ENCODE measurements at regions of chr22 and their contacts with region 1.

Region 1: DNA sequence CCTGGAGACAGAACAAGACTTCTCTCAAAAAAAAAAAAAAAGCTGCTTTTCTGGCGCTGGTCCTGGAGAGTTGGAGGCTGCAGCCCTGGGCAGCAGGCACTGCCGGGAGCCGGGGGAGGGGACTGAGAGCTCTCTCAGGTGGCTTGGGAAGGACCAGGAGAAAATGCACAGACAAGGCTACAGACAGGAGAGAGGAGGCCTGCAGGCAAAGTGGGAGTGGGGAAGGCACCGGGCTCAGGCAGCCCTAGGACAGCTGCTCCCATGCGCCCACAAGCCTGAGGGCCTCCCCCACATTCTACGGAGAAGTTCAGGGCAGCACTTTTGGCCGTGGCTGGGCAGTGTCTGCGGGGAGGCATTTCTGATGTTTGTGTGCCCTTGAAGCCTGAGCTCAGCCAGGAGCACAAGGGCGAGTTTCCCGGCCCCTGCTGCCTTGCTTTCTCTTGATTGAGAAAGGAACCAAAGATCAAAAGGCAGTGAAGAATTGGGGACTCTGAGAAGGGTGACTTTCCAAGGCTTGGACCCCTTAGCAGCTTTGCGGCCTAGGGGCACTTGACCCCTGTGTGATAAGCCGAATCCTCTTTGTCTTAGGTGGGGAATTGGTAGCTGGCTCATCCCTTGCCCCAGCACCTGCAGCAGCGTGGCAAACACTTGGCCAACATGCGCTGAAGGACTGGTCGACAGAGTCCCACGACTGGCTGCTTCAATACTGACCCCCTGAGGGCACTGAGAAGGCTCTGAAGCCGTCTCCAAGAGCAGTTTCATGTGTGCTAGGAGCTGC is 35.3 kb downstream of the PPM1F start:
- DNase-seq: peak in 1 of 2 donors; percentile 36
- ATAC-seq: peak in 2 of 4 donors; percentile 23 to 30
- H3K4me3 ChIP-seq: no peak overlapping the region
- H3K27ac ChIP-seq: no peak overlapping the region
- H3K4me1 ChIP-seq: no peaks in the 10 kb centered on the region
- H3K27me3 ChIP-seq: no peaks in the 10 kb centered on the region
- CTCF ChIP-seq: no peak

Region 2: DNA sequence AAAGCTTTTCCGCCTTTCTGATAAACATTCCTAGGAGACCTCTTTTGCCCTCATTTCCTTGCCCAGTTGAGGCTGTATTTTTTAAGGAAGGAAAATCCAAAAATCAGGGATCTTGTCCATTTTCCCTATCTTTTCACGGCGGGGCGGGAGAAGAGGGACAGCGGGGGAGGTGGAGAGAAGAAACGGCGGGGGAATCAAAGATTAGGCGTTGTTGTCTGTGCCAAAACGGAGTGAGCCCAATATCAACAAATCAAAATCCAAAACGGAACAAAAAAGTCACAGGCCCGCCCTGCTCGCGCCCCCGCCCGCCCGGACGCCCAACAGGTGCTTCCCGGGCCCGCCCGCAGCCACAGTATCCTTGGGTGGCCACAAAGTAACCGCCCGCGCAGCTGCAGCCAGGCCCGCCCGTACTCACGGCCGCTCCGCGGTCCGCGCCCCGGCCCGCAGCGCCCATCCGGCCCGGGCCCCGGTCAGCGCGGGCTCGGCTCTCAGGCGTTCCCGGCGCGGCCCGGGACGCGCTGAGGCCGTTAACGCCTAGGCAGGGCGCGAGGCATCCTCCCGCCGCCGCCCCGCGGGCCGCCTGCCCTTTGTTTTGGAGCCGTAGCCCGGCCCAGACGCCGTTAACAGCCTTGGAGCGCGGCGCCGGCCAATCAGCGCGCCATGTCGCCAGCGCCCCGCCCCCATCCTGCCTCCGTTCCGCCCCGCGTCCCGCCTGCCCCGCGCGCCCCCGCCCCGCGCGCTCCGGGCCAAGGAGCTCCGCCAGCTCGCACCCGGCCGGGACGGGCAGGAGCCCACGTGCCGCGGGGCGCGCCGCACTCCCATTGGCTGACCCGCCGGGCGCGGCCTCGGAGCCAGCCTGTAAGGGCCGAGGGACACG is 181.9 kb before region 1 on chr22 and contains the start of gene YPEL1:
- intact Hi-C with region 1: no loop called
- DNase-seq: peak; percentile 98
- ATAC-seq: peak; percentile 96 to 98 (median 97)
- H3K4me3 ChIP-seq: peak within 1 kb of the TSS; percentile 74
- H3K27ac ChIP-seq: peak within 1 kb of the TSS; percentile 92
- H3K4me1 ChIP-seq: peaks cover 20% of the 10 kb centered on the region
- H3K27me3 ChIP-seq: no peaks in the 10 kb centered on the region
- CTCF ChIP-seq: no peak
- total RNA-seq, gene YPEL1: 2.9 to 21.9 (median 10.3) TPM

Region 3: GRCh38 chr22:21961886-21962654 is 44.7 kb after region 1 on chr22:
- intact Hi-C with region 1: loop called in 1 of 2 experiments (anchors 5 kb)
- DNase-seq: no peak
- ATAC-seq: peak; percentile 77 to 82 (median 82)
- H3K4me3 ChIP-seq: no peak overlapping the region
- H3K27ac ChIP-seq: peak overlapping the region; percentile 62
- H3K4me1 ChIP-seq: peaks cover 16% of the 10 kb centered on the region
- H3K27me3 ChIP-seq: no peaks in the 10 kb centered on the region
- CTCF ChIP-seq: no peak

Region 4: GRCh38 chr22:22037740-22038139 is 120.4 kb after region 1 on chr22:
- intact Hi-C with region 1: no loop called
- DNase-seq: no peak
- ATAC-seq: no peak
- H3K4me3 ChIP-seq: no peak overlapping the region
- H3K27ac ChIP-seq: no peak overlapping the region
- H3K4me1 ChIP-seq: no peaks in the 10 kb centered on the region
- H3K27me3 ChIP-seq: no peaks in the 10 kb centered on the region
- CTCF ChIP-seq: no peak